Panc1 (cell line): ENCODE measurements at regions of chr12 and their contacts with region 1.

Region 1: GRCh38 chr12:123559468-123559867 is 24.9 kb upstream of the TMED2 start:
- DNase-seq: no peak
- ATAC-seq: no peak
- H3K4me3 ChIP-seq: no peak overlapping the region
- H3K27ac ChIP-seq: no peak overlapping the region
- H3K4me1 ChIP-seq: no peaks in the 10 kb centered on the region
- H3K27me3 ChIP-seq: no peaks in the 10 kb centered on the region
- CTCF ChIP-seq: no peak

Region 2: GRCh38 chr12:123445388-123446351 is 113.8 kb before region 1 on chr12:
- CTCF ChIA-PET with region 1: no interaction called
- POLR2A ChIA-PET with region 1: interaction called, 11 read pairs
- in situ Hi-C with region 1: no loop called
- intact Hi-C with region 1: no loop called
- DNase-seq: no peak
- ATAC-seq: peak; percentile 75
- H3K4me3 ChIP-seq: peak overlapping the region in 1 of 2 experiments; percentile 27; a peak in 2 of 4 replicates
- H3K27ac ChIP-seq: peak overlapping the region; percentile 64
- H3K4me1 ChIP-seq: peaks cover 17% of the 10 kb centered on the region
- H3K27me3 ChIP-seq: no peaks in the 10 kb centered on the region
- CTCF ChIP-seq: no peak